T-cell (primary cell): ENCODE measurements at regions of chr11 and their contacts with region 1.

Region 1: DNA sequence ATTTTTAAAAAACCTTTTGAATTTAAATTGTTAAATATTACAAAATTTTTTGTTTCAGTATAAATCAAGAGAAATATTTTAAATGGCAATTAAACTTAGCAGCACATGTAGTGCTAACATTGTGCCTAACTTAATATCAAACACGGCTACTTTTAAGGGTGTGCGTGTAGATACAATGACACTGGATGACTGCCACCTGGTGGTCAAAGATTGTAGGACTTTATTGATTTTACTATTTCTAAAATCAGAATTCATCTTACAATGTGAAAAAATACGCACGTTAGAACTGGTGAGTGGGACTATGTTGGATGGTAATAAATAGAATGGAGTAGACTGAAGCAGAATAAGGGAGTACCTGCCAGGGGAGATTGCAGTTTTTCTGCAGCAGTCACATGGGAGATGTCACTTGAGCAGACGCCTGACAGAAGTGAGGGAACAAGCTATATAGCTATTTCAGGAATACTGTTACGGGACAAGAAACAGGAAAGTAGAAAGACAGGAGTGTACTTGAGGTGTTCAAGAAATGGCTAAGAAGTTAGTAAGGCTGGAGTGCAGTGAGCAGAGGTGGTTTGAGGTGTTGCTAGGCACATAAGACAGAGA is 52.9 kb downstream of the UVRAG start:
- DNase-seq: peak in 27 of 35 experiments; percentile 2 to 80 (median 27)
- ATAC-seq: peak; percentile 43 to 59 (median 48)
- H3K4me3 ChIP-seq: no peak overlapping the region
- H3K4me3 Mint-ChIP-seq: no peak overlapping the region
- H3K27ac ChIP-seq: no peak overlapping the region
- H3K27ac Mint-ChIP-seq: no peak overlapping the region
- H3K4me1 ChIP-seq: no peaks in the 10 kb centered on the region
- H3K4me1 Mint-ChIP-seq: peaks cover 4 to 9% (median 6%) of the 10 kb centered on the region in 3 donors
- H3K27me3 ChIP-seq: no peaks in the 10 kb centered on the region
- H3K27me3 Mint-ChIP-seq: no peaks in the 10 kb centered on the region

Region 2: GRCh38 chr11:75802913-75803820 is 64.7 kb before region 1 on chr11:
- CTCF ChIA-PET with region 1: interaction called, 26 to 45 read pairs
- POLR2A ChIA-PET with region 1: no interaction called
- DNase-seq: peak; percentile 6 to 83 (median 57)
- ATAC-seq: peak; percentile 76 to 87 (median 80)
- H3K4me3 ChIP-seq: no peak overlapping the region
- H3K4me3 Mint-ChIP-seq: no peak overlapping the region
- H3K27ac ChIP-seq: no peak overlapping the region
- H3K27ac Mint-ChIP-seq: no peak overlapping the region
- H3K4me1 ChIP-seq: peaks cover 5 to 24% of the 10 kb centered on the region in 2 experiments
- H3K4me1 Mint-ChIP-seq: peaks cover 11 to 22% (median 14%) of the 10 kb centered on the region in 3 donors
- H3K27me3 ChIP-seq: no peaks in the 10 kb centered on the region
- H3K27me3 Mint-ChIP-seq: peaks cover 0 to 2% of the 10 kb centered on the region in 2 donors